Tibial artery (tissue), 4 donors: ENCODE measurements at regions of chr7 and their contacts with region 1.

Region 1: DNA sequence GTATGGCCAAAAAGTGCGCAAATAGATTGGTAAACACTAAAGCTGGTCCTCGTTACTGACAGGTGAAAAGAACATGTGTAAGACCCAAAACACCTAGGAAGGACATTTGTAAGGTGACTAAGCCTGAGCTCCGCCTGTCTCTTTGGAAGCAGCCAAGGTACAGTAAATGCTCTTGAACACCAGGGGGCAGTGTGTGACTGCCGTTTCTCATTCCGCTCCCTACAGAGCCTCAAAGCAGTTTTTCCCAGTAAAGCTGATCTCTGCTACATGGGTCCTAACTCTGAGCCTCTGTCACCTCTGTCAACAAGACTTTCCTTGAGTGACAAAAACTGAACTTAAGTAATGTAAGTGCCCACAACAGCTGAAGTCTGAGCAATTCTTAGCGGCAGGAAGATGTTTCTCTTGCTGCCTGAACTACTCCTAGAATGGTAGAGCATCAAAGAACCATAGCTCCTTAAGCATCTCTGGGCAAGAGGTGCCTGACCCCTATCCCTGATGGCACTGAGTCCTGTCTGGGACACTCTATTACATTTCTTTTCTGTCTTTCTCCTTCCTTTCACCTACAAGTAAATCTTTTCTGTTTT is 238.0 kb upstream of the INHBA start:
- DNase-seq: peak; percentile 51 to 77
- H3K4me3 ChIP-seq: no peak overlapping the region
- H3K27ac ChIP-seq: no peak overlapping the region
- H3K4me1 ChIP-seq: peaks cover 0 to 26% (median 10%) of the 10 kb centered on the region in 4 donors
- H3K27me3 ChIP-seq: no peaks in the 10 kb centered on the region
- CTCF ChIP-seq: peak; percentile 81 to 88

Region 2: DNA sequence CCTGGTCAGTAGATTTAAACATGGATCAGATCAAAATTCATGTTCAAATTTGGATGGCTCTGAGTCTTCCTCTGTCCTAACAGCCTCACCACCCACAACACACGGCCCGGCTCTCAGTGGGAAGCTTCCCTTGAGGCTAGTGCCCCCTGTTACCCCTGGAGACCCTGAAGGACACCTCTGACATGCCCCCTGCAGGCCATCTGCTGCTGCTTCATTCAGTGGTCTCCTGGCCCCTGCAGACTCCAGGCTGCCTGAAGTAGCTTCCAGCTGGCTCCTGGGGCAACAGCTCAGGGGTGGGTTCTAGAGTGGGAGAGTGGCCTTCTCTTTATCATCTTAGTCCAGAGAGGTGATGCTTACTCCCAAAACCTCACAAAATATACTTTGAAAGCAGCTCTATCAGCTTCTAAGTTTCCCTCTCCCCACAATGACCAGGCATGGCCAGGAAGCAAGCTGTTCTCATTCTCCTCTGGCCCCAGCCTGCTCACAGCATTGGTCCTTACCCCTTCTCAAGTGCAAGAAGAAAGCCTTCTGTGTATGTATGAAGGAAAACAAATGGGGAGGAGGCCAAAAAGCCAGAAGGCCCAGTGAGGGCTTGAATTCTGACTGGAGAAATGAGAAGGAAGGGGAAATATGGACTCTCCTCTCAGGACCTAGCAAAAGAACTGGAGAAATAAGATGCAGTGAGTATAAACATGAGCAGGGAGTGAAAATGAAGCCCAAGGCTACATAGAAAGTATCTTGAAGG is 48.3 kb before region 1 on chr7:
- intact Hi-C with region 1: no loop called
- DNase-seq: no peak
- H3K4me3 ChIP-seq: no peak overlapping the region
- H3K27ac ChIP-seq: peak overlapping the region; percentile 11 to 39
- H3K4me1 ChIP-seq: peaks cover 0 to 17% (median 7%) of the 10 kb centered on the region in 4 donors
- H3K27me3 ChIP-seq: no peaks in the 10 kb centered on the region
- CTCF ChIP-seq: no peak

Region 3: DNA sequence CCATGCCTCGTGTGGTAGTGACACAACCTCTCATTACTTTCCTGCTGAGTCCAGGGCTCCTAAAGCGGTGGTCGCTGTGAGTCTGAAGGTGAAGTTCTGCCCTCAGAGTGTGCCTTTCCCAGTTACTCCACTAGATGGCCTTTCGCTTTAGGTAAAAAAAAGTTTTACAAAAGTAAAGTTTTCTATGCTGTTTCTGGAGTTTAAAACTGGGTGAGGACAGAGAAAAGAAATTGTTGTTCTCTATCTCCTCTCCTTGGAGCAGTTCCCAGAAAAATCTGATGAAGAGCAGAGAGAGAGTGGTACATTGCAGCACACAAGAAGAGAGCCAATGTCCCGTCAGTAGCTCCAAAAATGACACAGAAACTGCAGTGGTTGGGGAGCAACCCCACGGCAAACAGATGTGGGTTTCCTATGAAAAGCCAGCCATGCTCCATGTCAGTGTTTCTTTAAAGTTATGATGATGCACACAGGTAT is 39.0 kb after region 1 on chr7:
- intact Hi-C with region 1: no loop called
- DNase-seq: no peak
- H3K4me3 ChIP-seq: no peak overlapping the region
- H3K27ac ChIP-seq: no peak overlapping the region
- H3K4me1 ChIP-seq: peaks cover 0 to 31% (median 14%) of the 10 kb centered on the region in 4 donors
- H3K27me3 ChIP-seq: no peaks in the 10 kb centered on the region
- CTCF ChIP-seq: peak; percentile 63 to 67

Region 4: DNA sequence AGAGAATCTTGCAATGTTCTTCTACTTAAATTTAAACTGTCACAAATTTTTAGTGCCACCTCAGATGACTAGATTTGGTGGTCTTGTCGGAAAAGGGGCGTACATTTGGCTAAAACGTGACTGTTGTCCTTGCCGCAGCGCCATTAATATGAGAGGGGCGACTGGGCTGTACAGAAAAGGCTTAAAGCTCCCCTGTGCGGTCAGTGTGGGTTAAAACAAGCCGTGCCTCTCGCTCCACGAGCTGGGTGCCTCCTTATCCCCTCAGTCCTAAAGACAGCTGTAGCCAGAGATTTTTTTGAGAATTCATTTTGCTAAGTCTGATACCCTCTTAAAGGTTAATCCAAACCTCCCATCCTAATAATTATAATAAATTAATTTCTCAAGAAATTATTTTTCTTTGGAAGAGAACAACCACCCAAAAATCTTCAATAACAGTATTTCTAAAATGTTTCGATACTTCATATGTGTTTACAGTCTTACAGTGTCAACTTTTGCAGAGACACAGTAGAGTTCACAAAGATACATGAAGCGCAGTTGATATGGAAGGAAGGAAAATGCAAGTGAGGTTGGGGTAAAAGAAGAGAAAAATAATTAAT is 902.5 kb after region 1 on chr7:
- intact Hi-C with region 1: loop called (anchors 5 kb)
- DNase-seq: peak in 1 of 2 donors; percentile 27
- H3K4me3 ChIP-seq: no peak overlapping the region
- H3K27ac ChIP-seq: no peak overlapping the region
- H3K4me1 ChIP-seq: peaks cover 0 to 5% (median 2%) of the 10 kb centered on the region in 4 donors
- H3K27me3 ChIP-seq: peaks cover 0 to 4% of the 10 kb centered on the region in 2 donors
- CTCF ChIP-seq: peak; percentile 44 to 52